HEK293 (cell line): ENCODE measurements at regions of chr2 and their contacts with region 1.

Region 1: DNA sequence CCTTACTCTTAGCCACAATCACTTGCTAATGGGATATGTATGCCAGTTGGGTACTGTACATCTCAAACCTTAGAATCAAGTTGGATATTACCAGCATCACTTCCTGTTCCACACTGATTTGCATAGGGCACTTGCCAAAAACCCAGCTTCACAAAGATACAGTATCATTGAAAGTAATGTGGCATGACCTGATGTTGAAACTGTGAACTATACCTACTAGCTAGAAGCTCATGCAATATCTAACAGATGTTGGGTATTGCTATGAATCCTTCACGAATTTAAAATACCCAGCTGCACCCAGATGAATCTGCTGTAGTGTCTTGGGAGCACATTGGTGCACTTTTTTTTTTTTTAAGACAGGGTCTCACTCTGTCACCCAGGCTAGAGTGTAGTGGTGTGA is 6.5 kb upstream of the STAMBP start:
- H3K4me3 ChIP-seq: no peak overlapping the region
- H3K27ac ChIP-seq: no peak overlapping the region
- H3K4me1 ChIP-seq: no peaks in the 10 kb centered on the region
- CTCF ChIP-seq: no peak

Region 2: GRCh38 chr2:73839652-73840411 is 17.6 kb after region 1 on chr2:
- CTCF ChIA-PET with region 1: interaction called, 20 read pairs
- POLR2A ChIA-PET with region 1: no interaction called
- H3K4me3 ChIP-seq: no peak overlapping the region
- H3K27ac ChIP-seq: no peak overlapping the region
- H3K4me1 ChIP-seq: no peaks in the 10 kb centered on the region; the same call in 1 of the 2 replicates
- CTCF ChIP-seq: no peak

Region 3: GRCh38 chr2:73896362-73897239 is 74.3 kb after region 1 on chr2:
- CTCF ChIA-PET with region 1: no interaction called
- POLR2A ChIA-PET with region 1: no interaction called
- H3K4me3 ChIP-seq: no peak overlapping the region
- H3K27ac ChIP-seq: no peak overlapping the region
- H3K4me1 ChIP-seq: no peaks in the 10 kb centered on the region
- CTCF ChIP-seq: no peak

Region 4: GRCh38 chr2:73916666-73917065 is 94.4 kb after region 1 on chr2:
- CTCF ChIA-PET with region 1: no interaction called
- POLR2A ChIA-PET with region 1: no interaction called
- H3K4me3 ChIP-seq: no peak overlapping the region
- H3K27ac ChIP-seq: no peak overlapping the region
- H3K4me1 ChIP-seq: no peaks in the 10 kb centered on the region
- CTCF ChIP-seq: no peak

Region 5: DNA sequence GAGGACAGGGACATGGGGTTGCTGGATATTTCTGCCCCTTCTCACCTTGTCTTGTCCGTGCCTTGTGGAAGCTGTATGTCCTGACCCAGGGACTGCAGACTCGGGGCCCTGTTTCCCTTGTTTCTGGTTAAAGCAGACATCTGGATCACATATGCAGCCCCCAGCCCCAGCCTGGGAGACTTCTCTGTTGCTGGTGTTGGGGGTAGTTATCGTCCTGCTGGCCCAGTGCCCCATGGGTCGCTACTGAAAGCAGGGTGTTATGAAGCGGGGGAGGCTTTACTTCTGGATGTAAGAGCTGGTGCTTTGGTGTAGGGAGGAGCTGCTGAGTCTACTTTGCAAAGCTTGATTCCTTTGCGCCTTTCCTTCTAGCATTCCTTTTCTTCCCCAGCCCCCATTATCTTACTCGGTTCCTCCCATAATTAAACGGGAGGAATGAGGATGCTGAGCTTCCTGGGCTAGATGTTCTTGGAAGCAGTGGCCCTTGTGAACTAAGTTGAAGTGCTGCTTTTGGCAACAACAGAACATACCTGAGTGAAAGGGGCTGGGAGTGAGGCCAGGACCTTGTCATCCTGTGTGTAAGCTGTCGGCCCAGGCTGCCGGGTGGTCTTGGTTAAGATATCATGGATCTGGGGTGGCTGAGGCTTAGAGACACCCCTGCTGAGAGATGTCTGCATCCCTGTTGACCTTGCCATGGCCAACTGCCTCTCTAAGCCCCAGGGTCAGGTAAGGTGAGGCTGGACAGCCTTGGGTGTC is 165.8 kb after region 1 on chr2:
- CTCF ChIA-PET with region 1: no interaction called
- POLR2A ChIA-PET with region 1: no interaction called
- H3K4me3 ChIP-seq: no peak overlapping the region
- H3K27ac ChIP-seq: no peak overlapping the region
- H3K4me1 ChIP-seq: peaks cover 7% of the 10 kb centered on the region; the same call in 1 of the 2 replicates
- CTCF ChIP-seq: no peak